A673 (cell line): ENCODE measurements at regions of chr10 and their contacts with region 1.

Region 1: DNA sequence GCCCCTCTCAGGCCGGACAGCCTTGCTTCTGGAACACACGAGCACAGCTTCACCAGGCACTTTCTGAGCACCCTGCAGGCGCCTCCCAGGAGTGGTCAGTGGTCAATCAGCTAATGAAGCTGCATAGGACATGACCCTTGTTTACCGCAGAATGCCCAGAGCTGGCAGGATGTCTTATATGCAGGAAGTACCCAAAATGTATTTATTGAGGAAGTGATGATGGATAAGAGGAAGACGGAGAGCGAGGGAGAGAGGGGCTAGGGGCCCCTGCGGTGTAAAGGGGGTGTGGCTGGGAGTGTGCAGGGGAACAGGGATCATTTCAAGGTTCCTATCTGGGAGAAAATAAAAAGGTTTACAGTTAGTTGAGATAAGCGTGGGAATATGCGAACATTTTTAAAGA is 3.3 kb downstream of the CYP2E1 start:
- DNase-seq: no peak
- H3K4me3 ChIP-seq: no peak overlapping the region
- H3K27ac ChIP-seq: no peak overlapping the region
- H3K4me1 ChIP-seq: no peaks in the 10 kb centered on the region
- H3K27me3 ChIP-seq: peaks cover 76% of the 10 kb centered on the region
- CTCF ChIP-seq: no peak

Region 2: DNA sequence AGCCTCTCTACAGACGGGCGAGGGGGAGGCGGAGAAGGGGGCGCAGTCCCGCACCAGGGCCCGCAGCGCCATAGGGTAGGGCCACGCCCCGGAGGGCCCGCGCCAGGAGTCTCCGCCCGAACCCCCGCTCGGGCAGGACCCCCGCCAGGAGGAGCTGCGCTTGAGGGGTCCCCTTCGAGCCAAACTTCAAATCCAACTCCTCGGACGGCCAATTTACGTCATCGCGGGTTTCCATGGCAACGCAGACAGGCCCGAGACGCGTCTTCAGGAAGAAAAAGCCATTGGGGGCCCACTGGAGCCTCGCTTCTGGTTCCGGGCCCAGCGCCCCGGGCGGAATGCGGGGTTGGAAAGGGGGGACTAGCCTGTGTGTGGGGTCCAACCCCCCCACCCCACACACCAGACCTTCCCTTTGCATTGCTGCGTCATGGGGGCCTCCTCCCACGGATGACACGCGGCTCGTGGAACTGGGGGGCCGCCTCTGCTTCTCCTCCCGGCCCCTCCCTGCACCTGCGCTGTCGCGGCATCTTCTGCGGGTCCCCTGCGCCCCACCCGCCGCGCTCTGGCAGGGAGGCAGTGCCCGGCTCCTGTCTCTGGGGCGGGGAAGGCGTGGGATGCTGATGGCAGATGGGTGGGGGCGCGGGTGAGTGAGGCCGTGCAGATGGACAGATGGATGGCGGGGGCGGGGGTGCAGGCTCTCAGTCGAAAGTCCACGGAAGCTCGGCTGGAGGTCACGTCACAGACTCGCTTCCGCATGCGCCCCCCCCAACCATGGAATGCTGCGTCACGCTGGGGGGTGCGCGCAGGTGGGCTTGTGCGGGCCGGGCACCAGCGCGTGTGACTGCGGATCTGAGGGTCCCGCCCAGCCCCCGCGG is 195.0 kb before region 1 on chr10:
- CTCF ChIA-PET with region 1: no interaction called
- POLR2A ChIA-PET with region 1: interaction called, 12 read pairs
- intact Hi-C with region 1: no loop called
- DNase-seq: peak; percentile 79
- H3K4me3 ChIP-seq: peak overlapping the region; percentile 28
- H3K27ac ChIP-seq: no peak overlapping the region
- H3K4me1 ChIP-seq: peaks cover 18% of the 10 kb centered on the region
- H3K27me3 ChIP-seq: peaks cover 58% of the 10 kb centered on the region
- CTCF ChIP-seq: no peak

Region 3: GRCh38 chr10:133394064-133394663 is 136.3 kb before region 1 on chr10 and contains the start of gene MTG1:
- CTCF ChIA-PET with region 1: no interaction called
- POLR2A ChIA-PET with region 1: no interaction called
- intact Hi-C with region 1: no loop called
- DNase-seq: peak; percentile 96
- H3K4me3 ChIP-seq: peak within 1 kb of the TSS; percentile 84
- H3K27ac ChIP-seq: peak within 1 kb of the TSS; percentile 87
- H3K4me1 ChIP-seq: peaks cover 4% of the 10 kb centered on the region
- H3K27me3 ChIP-seq: no peaks in the 10 kb centered on the region
- CTCF ChIP-seq: no peak
- total RNA-seq, gene MTG1: 79.0 and 83.3 TPM in 2 replicates